Psoas muscle (tissue), 8 donors: ENCODE measurements at regions of chr3 and their contacts with region 1.

Region 1: DNA sequence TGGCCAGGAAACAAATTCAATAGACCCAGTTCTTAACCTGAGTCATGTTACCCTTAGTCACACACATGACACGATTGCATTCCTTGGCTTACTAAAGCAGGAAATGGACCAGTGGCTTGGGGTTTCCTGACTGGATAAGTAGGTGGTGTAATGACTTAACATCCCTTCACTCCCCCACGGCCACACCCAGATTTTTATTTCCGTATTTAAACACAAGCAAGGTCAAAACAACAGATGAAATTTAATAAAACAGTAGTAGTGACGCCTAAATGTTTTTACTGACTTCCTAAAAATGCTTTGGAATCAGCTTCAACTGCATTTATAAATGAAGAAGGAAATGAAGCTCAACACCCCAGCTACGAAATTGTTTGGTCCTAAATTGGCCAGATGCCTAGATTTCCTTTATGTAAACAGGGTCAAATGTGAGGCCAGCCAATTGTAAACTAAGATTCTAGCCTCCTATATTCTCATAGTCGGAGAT is 324.3 kb downstream of the CHST2 start:
- DNase-seq: peak in 1 of 2 donors; percentile 26
- ATAC-seq: peak; percentile 61 to 86 (median 79)
- H3K4me3 ChIP-seq: no peak overlapping the region
- H3K27ac ChIP-seq: peak overlapping the region; percentile 63
- H3K4me1 ChIP-seq: peaks cover 5% of the 10 kb centered on the region
- H3K27me3 ChIP-seq: no peaks in the 10 kb centered on the region
- CTCF ChIP-seq: no peak

Region 2: GRCh38 chr3:143644370-143645089 is 200.6 kb after region 1 on chr3:
- intact Hi-C with region 1: loop called in 1 of 2 experiments (anchors 10 kb)
- DNase-seq: no peak
- ATAC-seq: peak; percentile 46 to 84 (median 73)
- H3K4me3 ChIP-seq: no peak overlapping the region
- H3K27ac ChIP-seq: no peak overlapping the region
- H3K4me1 ChIP-seq: peaks cover 3% of the 10 kb centered on the region
- H3K27me3 ChIP-seq: no peaks in the 10 kb centered on the region
- CTCF ChIP-seq: peak; percentile 59